ENCODE measurements at regions of chr4 and their contacts with region 1.

Region 1: GRCh38 chr4:10403633-10404445 is 53.4 kb downstream of the ZNF518B start:
- DNase-seq: peak in 3 of 5 donors; percentile 9 to 23 (median 21)
- H3K4me3 ChIP-seq: no peak overlapping the region
- H3K4me3 Mint-ChIP-seq: no peak overlapping the region
- H3K27ac ChIP-seq: no peak overlapping the region
- H3K27ac Mint-ChIP-seq: peak overlapping the region in 1 of 7 donors; percentile 32
- H3K4me1 ChIP-seq: no peaks in the 10 kb centered on the region
- H3K4me1 Mint-ChIP-seq: no peaks in the 10 kb centered on the region
- H3K27me3 ChIP-seq: no peaks in the 10 kb centered on the region
- H3K27me3 Mint-ChIP-seq: no peaks in the 10 kb centered on the region

Region 2: GRCh38 chr4:9704551-9705332 is 699.1 kb before region 1 on chr4:
- CTCF ChIA-PET with region 1: no interaction called
- POLR2A ChIA-PET with region 1: no interaction called
- intact Hi-C with region 1: loop called (anchors 10 kb)
- DNase-seq: no peak
- H3K4me3 ChIP-seq: no peak overlapping the region
- H3K4me3 Mint-ChIP-seq: no peak overlapping the region
- H3K27ac ChIP-seq: no peak overlapping the region
- H3K27ac Mint-ChIP-seq: no peak overlapping the region
- H3K4me1 ChIP-seq: no peaks in the 10 kb centered on the region
- H3K4me1 Mint-ChIP-seq: peaks cover 7 to 14% (median 8%) of the 10 kb centered on the region in 4 donors
- H3K27me3 ChIP-seq: no peaks in the 10 kb centered on the region
- H3K27me3 Mint-ChIP-seq: peaks cover 0 to 3% of the 10 kb centered on the region in 2 donors

Region 3: GRCh38 chr4:9762823-9763475 is 640.9 kb before region 1 on chr4:
- CTCF ChIA-PET with region 1: no interaction called
- POLR2A ChIA-PET with region 1: no interaction called
- intact Hi-C with region 1: loop called (anchors 5 kb)
- DNase-seq: peak in 4 of 5 donors; percentile 6 to 31 (median 16)
- H3K4me3 ChIP-seq: no peak overlapping the region
- H3K4me3 Mint-ChIP-seq: no peak overlapping the region
- H3K27ac ChIP-seq: no peak overlapping the region
- H3K27ac Mint-ChIP-seq: no peak overlapping the region
- H3K4me1 ChIP-seq: no peaks in the 10 kb centered on the region
- H3K4me1 Mint-ChIP-seq: no peaks in the 10 kb centered on the region
- H3K27me3 ChIP-seq: no peaks in the 10 kb centered on the region
- H3K27me3 Mint-ChIP-seq: peaks cover 2 to 9% of the 10 kb centered on the region in 2 donors

Region 4: GRCh38 chr4:10157478-10158332 is 246.1 kb before region 1 on chr4:
- CTCF ChIA-PET with region 1: interaction called, 6 read pairs
- POLR2A ChIA-PET with region 1: no interaction called
- intact Hi-C with region 1: loop called (anchors 1 kb)
- DNase-seq: peak in 4 of 5 donors; percentile 21 to 34 (median 28)
- H3K4me3 ChIP-seq: no peak overlapping the region
- H3K4me3 Mint-ChIP-seq: no peak overlapping the region
- H3K27ac ChIP-seq: no peak overlapping the region
- H3K27ac Mint-ChIP-seq: peak overlapping the region in 1 of 7 donors; percentile 19
- H3K4me1 ChIP-seq: peaks cover 34% of the 10 kb centered on the region
- H3K4me1 Mint-ChIP-seq: peaks cover 22 to 41% (median 29%) of the 10 kb centered on the region in 4 donors
- H3K27me3 ChIP-seq: no peaks in the 10 kb centered on the region
- H3K27me3 Mint-ChIP-seq: peaks cover 0 to 1% of the 10 kb centered on the region in 2 donors

Region 5: GRCh38 chr4:10421344-10422055 is 17.7 kb after region 1 on chr4:
- CTCF ChIA-PET with region 1: no interaction called
- POLR2A ChIA-PET with region 1: no interaction called
- intact Hi-C with region 1: no loop called
- DNase-seq: no peak
- H3K4me3 ChIP-seq: no peak overlapping the region
- H3K4me3 Mint-ChIP-seq: no peak overlapping the region
- H3K27ac ChIP-seq: no peak overlapping the region
- H3K27ac Mint-ChIP-seq: no peak overlapping the region
- H3K4me1 ChIP-seq: no peaks in the 10 kb centered on the region
- H3K4me1 Mint-ChIP-seq: peaks cover 0 to 2% (median 0%) of the 10 kb centered on the region in 4 donors
- H3K27me3 ChIP-seq: no peaks in the 10 kb centered on the region
- H3K27me3 Mint-ChIP-seq: peaks cover 0 to 1% of the 10 kb centered on the region in 2 donors